ENCODE measurements at regions of chr11 and their contacts with region 1.

Region 1: DNA sequence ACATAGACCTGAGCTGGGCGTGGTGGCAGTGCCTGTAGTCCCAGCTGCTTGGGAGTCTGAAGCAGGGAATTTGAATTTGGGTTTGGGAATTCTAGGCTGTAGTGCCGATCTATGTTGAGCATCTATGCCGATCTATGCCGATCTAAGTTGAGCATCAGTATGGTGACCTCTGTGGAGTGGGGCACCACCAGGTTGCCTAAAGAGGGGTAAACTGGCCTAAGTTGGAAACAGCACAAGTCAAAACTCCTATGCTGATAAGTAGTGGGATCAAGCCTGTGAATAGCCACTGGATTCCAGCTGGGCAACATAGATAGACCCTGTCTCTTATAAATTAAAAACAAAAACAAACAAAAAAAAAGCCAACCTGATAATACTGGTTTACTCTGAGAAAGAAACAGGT is 7.4 kb downstream of the WEE1 start:
- DNase-seq: no peak
- ATAC-seq: no peak
- H3K4me3 ChIP-seq: no peak overlapping the region
- H3K27ac ChIP-seq: no peak overlapping the region; the same call in 2 of the 3 replicates
- H3K4me1 ChIP-seq: peaks cover 8 to 9% of the 10 kb centered on the region in 2 experiments; a peak in 3 of 5 replicates
- H3K27me3 ChIP-seq: no peaks in the 10 kb centered on the region
- CTCF ChIP-seq: no peak
- EP300 ChIP-seq: no peak
- POLR2A ChIP-seq: peak; percentile 42; the same call in 1 of the 2 replicates
- RAD21 ChIP-seq: no peak

Region 2: DNA sequence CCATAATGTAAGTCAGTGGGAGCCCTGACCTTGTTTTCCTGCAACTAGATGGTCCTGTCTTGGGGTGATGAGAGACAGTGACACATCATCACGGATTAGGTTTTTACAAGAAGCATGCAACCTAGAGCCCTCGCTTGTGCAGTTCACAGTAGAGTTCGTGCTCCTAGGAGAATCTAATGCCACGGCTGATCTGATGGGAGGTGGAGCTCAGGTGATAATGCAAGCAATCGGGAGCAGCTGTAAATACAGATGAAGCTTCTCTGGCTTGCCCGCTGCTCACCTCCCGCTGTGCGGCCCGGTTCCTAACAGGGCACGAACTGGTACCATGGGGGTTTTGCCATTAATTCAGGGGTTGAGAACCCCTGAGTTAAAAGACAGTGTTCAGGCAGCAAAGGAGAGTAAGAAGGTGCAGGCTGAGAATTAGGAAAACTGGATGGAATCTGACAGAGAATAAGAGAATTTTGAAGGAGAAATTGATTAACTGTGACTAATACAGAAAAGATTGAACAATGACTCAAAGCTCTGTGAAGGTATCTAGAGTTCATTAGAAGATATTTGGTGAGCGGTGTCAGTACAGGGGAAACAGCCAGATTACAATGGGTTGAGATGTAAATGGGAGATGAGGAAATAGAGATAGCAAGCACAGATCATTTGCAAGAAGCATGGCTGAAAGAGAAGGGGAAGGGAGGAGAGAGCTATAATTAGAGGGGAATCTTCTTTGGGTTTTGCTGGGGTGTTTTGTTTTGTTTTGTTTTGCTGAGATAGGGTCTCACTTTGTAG is 13.6 kb after region 1 on chr11:
- CTCF ChIA-PET with region 1: no interaction called
- POLR2A ChIA-PET with region 1: interaction called, 23 read pairs
- in situ Hi-C with region 1: no loop called
- intact Hi-C with region 1: no loop called
- DNase-seq: no peak
- ATAC-seq: no peak
- H3K4me3 ChIP-seq: no peak overlapping the region
- H3K27ac ChIP-seq: no peak overlapping the region
- H3K4me1 ChIP-seq: peaks cover 4% of the 10 kb centered on the region in 2 experiments; a peak in 1 of 5 replicates
- H3K27me3 ChIP-seq: no peaks in the 10 kb centered on the region
- CTCF ChIP-seq: no peak
- EP300 ChIP-seq: no peak
- POLR2A ChIP-seq: no peak
- RAD21 ChIP-seq: no peak

Region 3: DNA sequence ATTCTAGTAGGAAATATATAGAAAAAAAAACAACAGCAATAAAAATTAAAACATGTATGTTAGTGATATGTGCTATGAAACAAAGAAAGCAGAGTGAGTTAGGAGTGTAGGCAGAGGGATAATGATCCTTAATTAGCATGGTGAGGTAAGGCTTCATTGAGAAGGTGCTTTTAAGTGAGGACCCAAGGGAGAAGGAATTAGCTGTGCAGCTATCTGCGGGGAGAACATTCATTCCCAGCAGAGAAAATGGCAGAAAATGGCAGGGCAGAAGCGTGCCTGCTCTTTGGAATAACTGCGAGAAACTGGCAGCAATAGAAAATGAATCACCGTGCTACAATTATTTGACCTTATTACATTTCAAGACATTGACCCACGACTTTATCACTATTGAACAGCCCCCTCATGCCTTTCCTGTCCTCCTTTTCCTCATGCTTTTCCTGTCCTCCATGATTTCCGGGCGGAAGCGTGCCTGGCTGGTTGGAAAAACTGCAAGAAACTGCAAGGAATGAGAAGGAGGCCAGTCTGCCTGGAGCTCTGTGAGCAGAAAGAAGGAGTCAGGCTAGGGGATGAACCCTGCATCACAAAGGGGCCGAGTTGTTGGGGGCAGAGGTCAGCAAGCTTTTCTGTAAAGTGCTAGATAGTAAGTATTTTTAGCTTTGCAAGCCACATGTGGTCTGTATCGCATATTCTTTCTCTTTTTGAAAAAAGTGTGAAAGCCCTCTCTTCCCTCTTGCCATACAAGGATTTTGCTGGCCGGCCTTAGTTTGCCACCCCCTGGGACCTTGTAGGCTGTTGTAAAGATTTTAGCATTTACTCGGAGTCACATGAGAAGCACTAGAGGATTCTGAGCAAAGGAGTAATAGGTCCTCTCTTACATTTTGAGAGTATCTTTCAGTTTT is 45.9 kb after region 1 on chr11:
- CTCF ChIA-PET with region 1: no interaction called
- POLR2A ChIA-PET with region 1: no interaction called
- in situ Hi-C with region 1: no loop called
- intact Hi-C with region 1: no loop called
- DNase-seq: peak in 2 of 4 experiments; percentile 33 to 55
- ATAC-seq: peak; percentile 78
- H3K4me3 ChIP-seq: no peak overlapping the region
- H3K27ac ChIP-seq: no peak overlapping the region
- H3K4me1 ChIP-seq: peaks cover 4 to 9% of the 10 kb centered on the region in 2 experiments; a peak in 3 of 5 replicates
- H3K27me3 ChIP-seq: no peaks in the 10 kb centered on the region
- CTCF ChIP-seq: no peak
- EP300 ChIP-seq: no peak
- POLR2A ChIP-seq: no peak
- RAD21 ChIP-seq: no peak

Measured in K562 (cell line).